Right lobe of liver (tissue), 6 donors: ENCODE measurements at regions of chr12 and their contacts with region 1.

Region 1: DNA sequence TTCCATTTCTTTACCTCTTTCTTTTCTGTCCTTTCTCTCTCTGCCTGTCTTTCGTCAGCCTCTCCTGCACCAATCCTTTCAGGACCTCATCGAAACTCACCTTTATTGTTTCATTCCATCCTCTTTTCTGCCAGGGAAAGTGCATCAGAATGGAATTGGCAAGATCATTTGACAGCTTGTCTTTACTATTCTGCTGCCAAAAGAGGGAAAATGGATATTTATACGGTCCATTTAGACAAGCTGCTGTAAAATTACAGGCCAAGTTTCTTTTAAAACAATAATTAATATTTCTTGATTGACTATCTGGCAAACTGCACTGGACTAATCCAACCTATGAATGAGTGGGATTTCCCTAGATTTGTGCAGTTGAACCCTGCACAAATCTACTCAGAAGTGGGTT is 7.6 kb upstream of the SRGAP1 start:
- DNase-seq: no peak
- ATAC-seq: no peak
- H3K4me3 ChIP-seq: no peak overlapping the region
- H3K27ac ChIP-seq: no peak overlapping the region
- H3K4me1 ChIP-seq: no peaks in the 10 kb centered on the region
- H3K27me3 ChIP-seq: no peaks in the 10 kb centered on the region
- CTCF ChIP-seq: no peak
- POLR2A ChIP-seq: no peak

Region 2: GRCh38 chr12:64181504-64182291 is 344.8 kb after region 1 on chr12:
- intact Hi-C with region 1: loop called in 1 of 2 experiments (anchors 10 kb)
- DNase-seq: peak in 1 of 3 donors; percentile 61
- ATAC-seq: peak; percentile 91 to 96 (median 93)
- H3K4me3 ChIP-seq: no peak overlapping the region
- H3K27ac ChIP-seq: peak overlapping the region in 1 of 3 donors; percentile 34
- H3K4me1 ChIP-seq: peaks cover 0 to 4% (median 0%) of the 10 kb centered on the region in 4 donors
- H3K27me3 ChIP-seq: no peaks in the 10 kb centered on the region
- CTCF ChIP-seq: peak; percentile 60 to 73 (median 69)
- POLR2A ChIP-seq: no peak

Region 3: DNA sequence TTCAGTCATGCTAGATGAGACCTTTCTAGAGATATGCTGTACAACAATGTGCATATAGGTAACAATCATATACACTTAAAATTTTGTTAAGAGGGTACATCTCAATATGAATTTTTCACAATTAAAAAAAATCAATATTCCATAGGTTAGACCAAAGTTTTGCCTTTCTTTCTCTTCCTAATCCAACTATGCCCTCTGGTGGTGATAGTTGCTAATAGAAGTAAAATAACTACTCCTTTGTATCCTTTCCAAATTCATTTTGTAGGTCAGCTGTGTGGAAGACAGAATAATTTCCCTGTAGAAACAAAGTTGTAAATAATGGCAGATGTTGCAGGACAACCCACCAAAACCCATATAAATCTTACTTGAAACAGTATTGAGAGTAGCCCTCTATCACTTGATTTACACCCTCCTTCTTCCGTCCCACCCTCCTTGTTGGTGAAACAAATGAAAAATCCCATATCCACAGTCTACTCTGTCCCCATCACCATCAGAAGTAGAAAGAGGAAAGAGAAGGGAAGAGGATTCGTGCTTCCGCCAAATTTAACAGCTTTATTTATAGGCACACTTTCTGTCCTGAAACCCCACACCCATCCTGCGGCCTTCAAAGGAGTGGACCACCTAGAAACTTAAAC is 419.3 kb after region 1 on chr12:
- intact Hi-C with region 1: loop called (anchors 5 kb)
- DNase-seq: no peak
- ATAC-seq: peak; percentile 51 to 74 (median 72)
- H3K4me3 ChIP-seq: no peak overlapping the region
- H3K27ac ChIP-seq: no peak overlapping the region
- H3K4me1 ChIP-seq: no peaks in the 10 kb centered on the region
- H3K27me3 ChIP-seq: no peaks in the 10 kb centered on the region
- CTCF ChIP-seq: peak; percentile 69 to 77 (median 72)
- POLR2A ChIP-seq: no peak